Psoas muscle (tissue), 8 donors: ENCODE measurements at regions of chr9 and their contacts with region 1.

Region 1: GRCh38 chr9:80222466-80223169 is 650.9 kb downstream of the TLE4 start:
- DNase-seq: no peak
- ATAC-seq: no peak
- H3K4me3 ChIP-seq: no peak overlapping the region
- H3K27ac ChIP-seq: no peak overlapping the region
- H3K4me1 ChIP-seq: no peaks in the 10 kb centered on the region
- H3K27me3 ChIP-seq: no peaks in the 10 kb centered on the region
- CTCF ChIP-seq: no peak

Region 2: GRCh38 chr9:80285326-80285725 is 62.7 kb after region 1 on chr9:
- intact Hi-C with region 1: loop called in 1 of 2 experiments (anchors 10 kb)
- DNase-seq: no peak
- ATAC-seq: no peak
- H3K4me3 ChIP-seq: no peak overlapping the region
- H3K27ac ChIP-seq: no peak overlapping the region
- H3K4me1 ChIP-seq: no peaks in the 10 kb centered on the region
- H3K27me3 ChIP-seq: no peaks in the 10 kb centered on the region
- CTCF ChIP-seq: no peak